ENCODE measurements at regions of chr11 and their contacts with region 1.

Region 1: GRCh38 chr11:18588297-18589252 is at the start of gene UEVLD:
- DNase-seq: peak; percentile 88
- H3K4me3 ChIP-seq: peak within 1 kb of the TSS; percentile 85 to 98 (median 86)
- H3K27ac ChIP-seq: peak within 1 kb of the TSS; percentile 91
- H3K4me1 ChIP-seq: peaks cover 21% of the 10 kb centered on the region
- H3K27me3 ChIP-seq: no peaks in the 10 kb centered on the region
- CTCF ChIP-seq: no peak
- total RNA-seq, gene UEVLD: 25.0 to 30.0 TPM

Region 2: GRCh38 chr11:18046116-18046777 is 542.3 kb before region 1 on chr11 and contains the start of gene TPH1:
- CTCF ChIA-PET with region 1: no interaction called
- dilution Hi-C with region 1: no loop called
- in situ Hi-C with region 1: no loop called
- intact Hi-C with region 1: no loop called
- DNase-seq: peak; percentile 76
- H3K4me3 ChIP-seq: peak within 1 kb of the TSS in 2 of 3 experiments; percentile 14 to 32
- H3K27ac ChIP-seq: no peak within 1 kb of the TSS
- H3K4me1 ChIP-seq: peaks cover 9% of the 10 kb centered on the region
- H3K27me3 ChIP-seq: peaks cover 2% of the 10 kb centered on the region
- CTCF ChIP-seq: no peak
- total RNA-seq, gene TPH1: 0.17 to 0.24 TPM

Region 3: GRCh38 chr11:18567081-18567480 is 21.5 kb before region 1 on chr11:
- CTCF ChIA-PET with region 1: no interaction called
- dilution Hi-C with region 1: no loop called
- in situ Hi-C with region 1: no loop called
- intact Hi-C with region 1: loop called (anchors 2 kb)
- DNase-seq: no peak
- H3K4me3 ChIP-seq: no peak overlapping the region
- H3K27ac ChIP-seq: no peak overlapping the region
- H3K4me1 ChIP-seq: no peaks in the 10 kb centered on the region
- H3K27me3 ChIP-seq: no peaks in the 10 kb centered on the region
- CTCF ChIP-seq: no peak

Region 4: GRCh38 chr11:18634140-18635032 is 45.8 kb after region 1 on chr11 and contains the start of gene SPTY2D1:
- CTCF ChIA-PET with region 1: no interaction called
- dilution Hi-C with region 1: no loop called
- in situ Hi-C with region 1: no loop called
- intact Hi-C with region 1: loop called (anchors 2 kb)
- DNase-seq: peak; percentile 99
- H3K4me3 ChIP-seq: peak within 1 kb of the TSS; percentile 78 to 98 (median 97)
- H3K27ac ChIP-seq: peak within 1 kb of the TSS; percentile 89
- H3K4me1 ChIP-seq: peaks cover 5% of the 10 kb centered on the region
- H3K27me3 ChIP-seq: no peaks in the 10 kb centered on the region
- CTCF ChIP-seq: peak in 1 of 2 donors; percentile 4
- total RNA-seq, gene SPTY2D1: 18.0 to 20.7 TPM

Region 5: GRCh38 chr11:18768472-18768901 is 179.9 kb after region 1 on chr11:
- CTCF ChIA-PET with region 1: no interaction called
- dilution Hi-C with region 1: no loop called
- in situ Hi-C with region 1: no loop called
- intact Hi-C with region 1: loop called (anchors 1 kb)
- DNase-seq: no peak
- H3K4me3 ChIP-seq: no peak overlapping the region
- H3K27ac ChIP-seq: no peak overlapping the region
- H3K4me1 ChIP-seq: peaks cover 9% of the 10 kb centered on the region
- H3K27me3 ChIP-seq: no peaks in the 10 kb centered on the region
- CTCF ChIP-seq: no peak

Measured in mammary epithelial cell (primary cell).